ENCODE measurements at regions of chr19 and their contacts with region 1.

Region 1: GRCh38 chr19:8001995-8002849 is 3.2 kb downstream of the ELAVL1 start:
- DNase-seq: peak; percentile 97
- ATAC-seq: peak; percentile 60
- H3K4me3 ChIP-seq: peak overlapping the region; percentile 55
- H3K27ac ChIP-seq: peak overlapping the region; percentile 74
- H3K4me1 ChIP-seq: peaks cover 32% of the 10 kb centered on the region
- H3K27me3 ChIP-seq: no peaks in the 10 kb centered on the region
- CTCF ChIP-seq: peak; percentile 97

Region 2: DNA sequence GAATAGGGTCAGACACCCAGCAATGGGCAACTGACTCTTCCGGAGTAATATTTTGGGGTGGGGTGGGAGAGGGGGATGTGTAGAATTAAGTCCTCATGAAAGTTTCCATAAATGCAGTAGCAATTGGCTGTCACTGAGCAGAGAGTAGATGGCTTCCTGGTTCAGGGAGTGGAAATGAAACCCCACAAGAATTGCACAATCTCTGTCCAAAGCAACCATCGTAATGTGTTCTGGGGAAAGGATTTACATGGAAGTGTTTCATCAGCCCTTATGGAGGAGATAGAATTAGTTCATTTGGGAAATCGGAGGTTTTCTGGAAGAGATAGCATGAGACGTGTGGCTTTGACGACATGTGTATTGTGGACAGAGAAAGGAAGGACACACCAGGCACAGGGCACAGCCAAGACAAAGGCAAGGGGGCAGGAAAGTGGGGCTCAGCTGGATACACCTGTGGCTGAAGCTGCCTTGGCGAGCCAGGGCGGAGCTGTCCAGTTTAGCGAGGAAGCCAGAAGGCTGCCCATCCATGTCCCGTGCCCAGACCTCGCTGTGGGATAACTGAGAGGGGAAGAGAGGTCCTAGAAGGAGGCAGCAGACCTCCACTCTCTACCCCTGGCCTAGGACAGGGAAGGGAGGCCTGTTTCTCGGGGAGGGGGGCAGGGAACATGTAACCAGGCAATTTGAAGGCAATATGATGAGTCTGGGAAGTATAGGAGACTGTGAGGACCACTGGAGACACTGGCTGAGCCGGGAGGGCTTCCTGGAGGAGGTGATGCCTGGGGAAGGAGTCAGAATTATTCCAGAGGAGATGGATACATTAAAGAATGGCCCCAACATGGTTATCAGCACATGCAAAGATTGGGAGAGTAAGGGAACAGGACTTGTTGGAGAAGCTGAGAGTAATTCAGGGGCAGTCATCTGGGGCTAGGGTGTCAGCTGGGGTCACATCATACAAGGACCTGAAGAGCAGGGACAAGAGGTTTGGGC is 267.7 kb before region 1 on chr19:
- CTCF ChIA-PET with region 1: no interaction called
- POLR2A ChIA-PET with region 1: no interaction called
- intact Hi-C with region 1: no loop called
- DNase-seq: no peak
- ATAC-seq: no peak
- H3K4me3 ChIP-seq: no peak overlapping the region
- H3K27ac ChIP-seq: no peak overlapping the region
- H3K4me1 ChIP-seq: no peaks in the 10 kb centered on the region
- H3K27me3 ChIP-seq: peaks cover 46% of the 10 kb centered on the region
- CTCF ChIP-seq: no peak

Region 3: DNA sequence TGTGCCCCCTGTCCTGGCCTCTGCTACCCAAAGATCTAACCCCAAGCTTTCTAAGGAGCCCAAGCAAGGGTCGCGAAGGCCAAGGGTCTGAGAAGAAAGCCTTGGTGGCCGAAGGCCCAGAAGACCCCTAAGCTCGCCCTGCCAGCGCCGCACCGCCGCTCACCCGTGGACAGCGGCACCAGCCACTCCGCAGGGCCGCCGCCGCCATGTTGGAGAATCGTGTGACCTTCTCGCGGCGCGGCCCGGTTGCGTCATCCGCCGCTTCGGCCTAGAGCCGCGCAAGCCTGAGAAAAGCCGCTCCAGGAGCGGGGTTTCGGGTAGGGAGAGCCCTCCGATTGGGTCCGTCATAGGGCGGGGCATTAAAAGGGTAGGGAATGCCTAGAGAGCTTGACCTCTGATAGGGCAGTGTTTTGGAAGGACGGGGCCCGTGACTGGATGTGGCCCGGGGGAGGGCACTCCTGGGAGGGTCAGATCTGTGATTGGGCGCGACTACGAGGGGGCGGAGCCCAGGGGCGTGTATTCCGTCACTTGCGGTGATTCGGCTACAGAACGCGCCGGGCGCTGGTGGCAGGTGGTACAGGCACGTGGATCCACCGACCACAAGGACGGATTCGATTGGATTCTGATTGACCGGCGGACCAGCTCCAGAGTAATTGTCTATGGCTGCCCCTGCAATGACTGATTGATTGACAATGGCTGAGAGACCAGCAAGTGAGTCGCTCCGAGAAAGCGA is 58.6 kb before region 1 on chr19 and contains the start of gene TIMM44:
- CTCF ChIA-PET with region 1: interaction called, 16 read pairs
- POLR2A ChIA-PET with region 1: no interaction called
- intact Hi-C with region 1: loop called (anchors 1 kb)
- DNase-seq: peak; percentile 100
- ATAC-seq: peak; percentile 98
- H3K4me3 ChIP-seq: peak within 1 kb of the TSS; percentile 91
- H3K27ac ChIP-seq: peak within 1 kb of the TSS; percentile 75
- H3K4me1 ChIP-seq: peaks cover 14% of the 10 kb centered on the region
- H3K27me3 ChIP-seq: no peaks in the 10 kb centered on the region
- CTCF ChIP-seq: no peak
- total RNA-seq, gene TIMM44: 191 and 262 TPM in 2 replicates

Region 4: DNA sequence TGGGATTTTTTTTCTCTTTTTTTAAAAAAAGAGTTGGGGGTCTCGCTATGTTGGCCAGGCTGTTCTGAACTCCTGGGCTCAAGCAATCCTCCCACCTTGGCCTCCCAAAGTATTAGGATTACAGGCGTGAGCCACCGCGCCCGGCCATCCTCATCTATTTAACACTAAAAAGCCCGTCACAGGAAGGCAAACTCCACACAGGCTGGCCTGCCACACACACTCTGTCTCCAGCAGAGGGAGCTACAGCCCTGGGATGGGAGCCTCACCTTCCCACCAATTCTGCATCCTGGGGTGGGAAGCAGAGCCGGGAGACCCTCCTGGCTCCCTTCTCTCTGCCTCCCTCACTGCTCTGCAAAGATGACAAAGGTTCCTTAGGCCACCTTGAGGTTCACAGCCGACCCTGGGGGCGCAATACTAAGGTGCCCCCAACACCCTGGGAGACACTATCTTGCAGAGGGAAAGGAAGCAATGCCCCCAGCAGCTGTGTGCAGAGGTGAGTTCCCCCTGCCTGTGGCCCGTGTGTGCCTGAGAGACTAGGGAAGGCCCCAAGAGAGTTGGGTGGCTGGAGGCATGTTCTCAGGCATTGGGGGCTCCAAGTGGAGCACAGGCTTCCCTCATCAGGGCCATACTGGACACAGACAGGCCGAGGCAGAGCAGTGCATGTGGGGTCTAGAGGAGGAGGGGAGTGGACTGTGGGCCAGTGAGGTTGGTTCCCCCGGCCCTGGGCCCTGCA is 31.3 kb before region 1 on chr19:
- CTCF ChIA-PET with region 1: interaction called, 9 read pairs
- POLR2A ChIA-PET with region 1: no interaction called
- intact Hi-C with region 1: loop called (anchors 1 kb)
- DNase-seq: peak; percentile 76
- ATAC-seq: peak; percentile 77
- H3K4me3 ChIP-seq: no peak overlapping the region
- H3K27ac ChIP-seq: no peak overlapping the region
- H3K4me1 ChIP-seq: peaks cover 3% of the 10 kb centered on the region; the same call in 1 of the 2 replicates
- H3K27me3 ChIP-seq: no peaks in the 10 kb centered on the region
- CTCF ChIP-seq: peak; percentile 98

Region 5: GRCh38 chr19:7978179-7978825 is 23.9 kb before region 1 on chr19:
- CTCF ChIA-PET with region 1: interaction called, 3 read pairs
- POLR2A ChIA-PET with region 1: no interaction called
- intact Hi-C with region 1: loop called (anchors 2 kb)
- DNase-seq: peak; percentile 15
- ATAC-seq: peak; percentile 34
- H3K4me3 ChIP-seq: no peak overlapping the region
- H3K27ac ChIP-seq: no peak overlapping the region
- H3K4me1 ChIP-seq: no peaks in the 10 kb centered on the region
- H3K27me3 ChIP-seq: no peaks in the 10 kb centered on the region
- CTCF ChIP-seq: no peak

Region 6: DNA sequence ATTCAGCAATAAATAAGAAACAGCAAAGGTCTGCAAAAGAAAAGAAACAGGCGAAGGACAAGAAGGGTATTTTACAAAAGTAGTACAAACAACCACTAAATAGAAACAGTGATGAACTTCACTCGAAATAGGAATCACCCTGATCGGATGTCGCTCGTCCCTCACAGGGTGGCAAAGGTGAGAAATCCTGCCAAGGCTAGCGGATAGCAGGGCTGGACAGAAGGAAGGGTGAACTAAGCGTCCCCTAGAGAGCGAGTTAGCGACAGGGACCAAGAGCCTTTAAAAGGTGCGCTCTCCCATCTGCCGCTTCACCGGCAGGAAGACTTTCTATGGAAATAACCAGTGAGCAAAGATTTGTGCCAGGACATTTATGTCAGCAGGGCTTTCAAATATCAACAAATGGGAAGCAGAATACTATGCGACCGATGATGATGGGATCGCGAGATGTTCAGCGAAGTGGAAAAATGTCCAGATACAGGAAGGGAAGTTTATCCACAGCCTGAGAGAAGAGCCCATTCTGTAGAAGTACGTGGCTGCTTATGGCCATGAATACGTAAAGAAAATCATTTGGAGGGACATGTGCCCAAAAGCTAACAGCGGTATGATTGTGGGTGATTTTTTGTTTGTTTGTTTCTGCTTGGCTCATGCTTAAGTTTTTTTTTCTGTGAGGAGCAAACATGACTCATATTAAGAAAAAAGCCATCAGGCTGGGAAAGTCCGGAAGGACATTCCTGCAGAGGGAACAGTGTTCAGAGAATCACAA is 15.7 kb before region 1 on chr19:
- CTCF ChIA-PET with region 1: interaction called, 10 read pairs
- POLR2A ChIA-PET with region 1: interaction called, 7 read pairs
- intact Hi-C with region 1: loop called (anchors 2 kb)
- DNase-seq: peak; percentile 94
- ATAC-seq: peak; percentile 71
- H3K4me3 ChIP-seq: peak overlapping the region; percentile 19; the same call in 1 of the 2 replicates
- H3K27ac ChIP-seq: peak overlapping the region; percentile 100
- H3K4me1 ChIP-seq: peaks cover 59% of the 10 kb centered on the region
- H3K27me3 ChIP-seq: no peaks in the 10 kb centered on the region
- CTCF ChIP-seq: no peak

Region 7: DNA sequence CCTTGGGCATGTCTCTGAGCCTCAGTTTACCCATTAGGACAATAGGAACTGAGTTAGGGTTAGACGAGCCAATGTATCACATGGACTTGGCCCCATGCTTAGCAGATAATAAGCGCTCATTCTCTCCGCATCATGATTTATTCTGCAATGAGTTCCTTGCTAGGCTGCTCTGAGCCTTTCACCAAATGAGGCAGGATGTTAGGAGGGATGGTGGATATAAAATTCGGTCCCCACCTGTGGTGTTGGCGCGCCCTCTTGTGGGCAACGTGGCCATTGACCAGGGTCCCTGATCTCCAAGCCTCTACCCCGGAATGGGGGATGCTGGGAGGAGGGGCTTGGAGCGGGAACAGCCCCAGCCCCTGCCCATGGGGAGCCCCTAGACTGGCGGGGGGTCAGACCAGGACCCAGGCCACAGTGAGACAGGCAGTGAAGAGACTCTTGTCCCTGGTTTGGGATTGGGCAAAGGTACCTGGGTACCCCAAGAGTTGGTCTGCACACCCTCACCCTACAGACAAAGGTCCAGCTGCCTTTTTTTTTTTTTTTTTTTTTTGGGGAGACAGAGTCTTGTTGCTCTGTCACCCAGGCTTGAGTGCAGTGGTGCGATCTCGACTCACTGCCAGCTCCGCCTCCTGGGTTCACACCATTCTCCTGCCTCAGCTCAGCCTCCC is 250.8 kb after region 1 on chr19:
- CTCF ChIA-PET with region 1: no interaction called
- POLR2A ChIA-PET with region 1: no interaction called
- intact Hi-C with region 1: loop called (anchors 1 kb)
- DNase-seq: peak; percentile 91
- ATAC-seq: peak; percentile 91
- H3K4me3 ChIP-seq: no peak overlapping the region
- H3K27ac ChIP-seq: no peak overlapping the region
- H3K4me1 ChIP-seq: no peaks in the 10 kb centered on the region
- H3K27me3 ChIP-seq: no peaks in the 10 kb centered on the region
- CTCF ChIP-seq: peak; percentile 98

Region 8: GRCh38 chr19:8528500-8528899 is 526.3 kb after region 1 on chr19:
- CTCF ChIA-PET with region 1: no interaction called
- POLR2A ChIA-PET with region 1: no interaction called
- intact Hi-C with region 1: no loop called
- DNase-seq: no peak
- ATAC-seq: no peak
- H3K4me3 ChIP-seq: no peak overlapping the region
- H3K27ac ChIP-seq: no peak overlapping the region
- H3K4me1 ChIP-seq: peaks cover 10% of the 10 kb centered on the region
- H3K27me3 ChIP-seq: no peaks in the 10 kb centered on the region
- CTCF ChIP-seq: no peak